ENCODE measurements at regions of chr5 and their contacts with region 1.

Region 1: GRCh38 chr5:175464074-175464941 is 14.1 kb upstream of the SFXN1 start:
- DNase-seq: peak; percentile 84
- ATAC-seq: peak; percentile 98
- H3K4me3 Mint-ChIP-seq: no peak overlapping the region
- H3K27ac Mint-ChIP-seq: peak overlapping the region; percentile 67
- H3K4me1 Mint-ChIP-seq: peaks cover 13% of the 10 kb centered on the region
- H3K27me3 Mint-ChIP-seq: peaks cover 8% of the 10 kb centered on the region

Region 2: GRCh38 chr5:175452166-175452565 is 12.1 kb before region 1 on chr5:
- CTCF ChIA-PET with region 1: interaction called, 11 read pairs
- POLR2A ChIA-PET with region 1: interaction called, 4 read pairs
- DNase-seq: no peak
- ATAC-seq: no peak
- H3K4me3 Mint-ChIP-seq: no peak overlapping the region
- H3K27ac Mint-ChIP-seq: no peak overlapping the region
- H3K4me1 Mint-ChIP-seq: peaks cover 2% of the 10 kb centered on the region
- H3K27me3 Mint-ChIP-seq: peaks cover 49% of the 10 kb centered on the region

Region 3: GRCh38 chr5:175478384-175479124 is 14.2 kb after region 1 on chr5 and contains the start of gene SFXN1:
- CTCF ChIA-PET with region 1: interaction called, 68 read pairs
- POLR2A ChIA-PET with region 1: interaction called, 30 read pairs
- DNase-seq: peak; percentile 85
- ATAC-seq: peak; percentile 76
- H3K4me3 Mint-ChIP-seq: peak within 1 kb of the TSS; percentile 94
- H3K27ac Mint-ChIP-seq: peak within 1 kb of the TSS; percentile 92
- H3K4me1 Mint-ChIP-seq: peaks cover 44% of the 10 kb centered on the region
- H3K27me3 Mint-ChIP-seq: peaks cover 8% of the 10 kb centered on the region
- total RNA-seq, gene SFXN1: 261 to 271 TPM

Region 4: DNA sequence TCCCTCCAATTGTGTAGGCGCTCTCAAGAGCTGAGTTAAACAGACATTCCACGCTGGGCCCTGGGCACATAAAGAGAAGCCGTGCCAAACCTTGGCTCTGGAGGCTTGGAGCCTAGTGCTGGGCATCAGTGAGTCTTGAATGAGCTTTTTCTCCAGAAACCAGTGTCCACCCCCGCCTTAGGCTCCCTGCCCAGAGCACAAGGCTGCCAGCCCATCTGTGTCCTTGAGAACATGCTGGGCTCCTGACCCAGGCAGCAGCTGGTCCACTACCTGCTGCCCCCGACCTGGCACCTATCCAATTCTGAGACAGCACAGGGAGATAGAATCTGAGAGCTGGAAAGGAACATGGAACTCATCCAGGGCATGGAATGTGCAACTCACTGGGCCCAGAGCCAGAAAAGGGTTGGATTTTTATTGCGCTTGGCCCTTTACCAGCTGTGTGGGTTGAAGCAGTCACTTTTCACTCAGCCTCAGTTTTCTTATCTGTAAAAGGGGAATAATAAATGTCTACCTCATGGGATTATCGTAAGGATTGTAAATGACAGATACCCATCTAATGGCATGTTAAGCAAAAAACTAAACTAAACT is 314.7 kb after region 1 on chr5:
- CTCF ChIA-PET with region 1: no interaction called
- POLR2A ChIA-PET with region 1: no interaction called
- DNase-seq: no peak
- ATAC-seq: no peak
- H3K4me3 Mint-ChIP-seq: no peak overlapping the region
- H3K27ac Mint-ChIP-seq: no peak overlapping the region
- H3K4me1 Mint-ChIP-seq: no peaks in the 10 kb centered on the region
- H3K27me3 Mint-ChIP-seq: peaks cover 25% of the 10 kb centered on the region